ENCODE measurements at regions of chr22 and their contacts with region 1.

Region 1: GRCh38 chr22:21857481-21857914 is 9.9 kb downstream of the MAPK1 start:
- DNase-seq: no peak
- ATAC-seq: no peak
- H3K4me3 ChIP-seq: no peak overlapping the region
- H3K27ac ChIP-seq: peak overlapping the region in 7 of 12 donors; percentile 8 to 40 (median 29)
- H3K4me1 ChIP-seq: peaks cover 0 to 98% (median 78%) of the 10 kb centered on the region in 12 donors
- H3K27me3 ChIP-seq: no peaks in the 10 kb centered on the region
- CTCF ChIP-seq: no peak
- POLR2A ChIP-seq: no peak

Region 2: DNA sequence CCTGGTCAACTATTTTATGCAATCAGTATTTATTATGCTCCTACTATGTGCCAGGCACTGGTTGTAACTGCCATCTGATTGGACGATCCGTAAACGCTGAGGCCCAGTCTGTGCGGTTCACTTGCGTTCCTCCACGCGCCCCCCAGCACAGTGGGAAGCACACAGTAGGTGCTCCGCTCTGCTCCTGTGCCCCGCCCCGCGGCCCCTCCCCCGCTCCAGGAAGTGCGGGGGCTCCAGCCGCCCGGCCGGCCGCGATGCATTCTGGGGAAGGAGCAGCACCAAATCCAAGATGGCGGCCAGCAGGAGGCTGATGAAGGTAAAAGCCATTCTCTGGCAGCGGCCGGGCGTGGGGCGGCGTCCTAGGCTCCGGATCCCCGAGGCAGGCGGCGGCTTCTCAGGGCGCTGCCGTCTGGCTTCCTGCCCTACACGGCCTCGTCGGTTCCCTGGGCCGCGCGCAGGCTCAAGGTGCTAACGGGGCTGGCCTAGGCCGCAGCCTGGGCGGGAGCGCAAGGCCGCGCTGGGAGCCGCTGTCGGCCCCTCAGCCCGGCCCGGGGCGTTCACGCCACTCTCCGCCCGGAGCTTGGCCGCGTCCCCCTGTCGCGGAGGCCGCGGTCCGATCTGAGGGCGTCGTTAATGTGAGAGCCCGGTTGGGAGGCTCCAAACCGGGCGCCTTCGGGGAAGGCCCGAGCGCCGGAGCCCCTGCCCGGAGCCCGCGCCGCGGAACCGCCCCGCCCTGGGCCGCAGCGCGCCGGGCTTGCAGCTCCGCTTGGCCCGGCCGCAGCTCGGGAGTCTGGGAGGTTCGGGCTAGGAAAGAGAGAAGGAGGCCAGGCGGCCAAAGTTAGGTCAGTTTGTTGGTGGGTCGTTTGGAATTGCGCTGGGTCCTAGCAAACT is 289.8 kb before region 1 on chr22 and contains the start of gene UBE2L3:
- intact Hi-C with region 1: no loop called
- DNase-seq: peak; percentile 86 to 92 (median 88)
- ATAC-seq: peak; percentile 91 to 97 (median 96)
- H3K4me3 ChIP-seq: peak within 1 kb of the TSS; percentile 75 to 99 (median 92)
- H3K27ac ChIP-seq: peak within 1 kb of the TSS; percentile 80 to 97 (median 88)
- H3K4me1 ChIP-seq: peaks cover 4 to 46% (median 37%) of the 10 kb centered on the region in 12 donors
- H3K27me3 ChIP-seq: no peaks in the 10 kb centered on the region
- CTCF ChIP-seq: peak in 1 of 12 donors; percentile 25
- POLR2A ChIP-seq: peak in 1 of 2 donors; percentile 40
- total RNA-seq, gene UBE2L3: 42.9 to 73.1 (median 50.3) TPM

Region 3: GRCh38 chr22:21807544-21808529 is 49.7 kb before region 1 on chr22:
- intact Hi-C with region 1: loop called in 2 of 10 experiments (anchors 10 kb)
- DNase-seq: no peak
- ATAC-seq: no peak
- H3K4me3 ChIP-seq: no peak overlapping the region
- H3K27ac ChIP-seq: no peak overlapping the region
- H3K4me1 ChIP-seq: peaks cover 0 to 19% (median 7%) of the 10 kb centered on the region in 12 donors
- H3K27me3 ChIP-seq: no peaks in the 10 kb centered on the region
- CTCF ChIP-seq: no peak
- POLR2A ChIP-seq: no peak

Region 4: DNA sequence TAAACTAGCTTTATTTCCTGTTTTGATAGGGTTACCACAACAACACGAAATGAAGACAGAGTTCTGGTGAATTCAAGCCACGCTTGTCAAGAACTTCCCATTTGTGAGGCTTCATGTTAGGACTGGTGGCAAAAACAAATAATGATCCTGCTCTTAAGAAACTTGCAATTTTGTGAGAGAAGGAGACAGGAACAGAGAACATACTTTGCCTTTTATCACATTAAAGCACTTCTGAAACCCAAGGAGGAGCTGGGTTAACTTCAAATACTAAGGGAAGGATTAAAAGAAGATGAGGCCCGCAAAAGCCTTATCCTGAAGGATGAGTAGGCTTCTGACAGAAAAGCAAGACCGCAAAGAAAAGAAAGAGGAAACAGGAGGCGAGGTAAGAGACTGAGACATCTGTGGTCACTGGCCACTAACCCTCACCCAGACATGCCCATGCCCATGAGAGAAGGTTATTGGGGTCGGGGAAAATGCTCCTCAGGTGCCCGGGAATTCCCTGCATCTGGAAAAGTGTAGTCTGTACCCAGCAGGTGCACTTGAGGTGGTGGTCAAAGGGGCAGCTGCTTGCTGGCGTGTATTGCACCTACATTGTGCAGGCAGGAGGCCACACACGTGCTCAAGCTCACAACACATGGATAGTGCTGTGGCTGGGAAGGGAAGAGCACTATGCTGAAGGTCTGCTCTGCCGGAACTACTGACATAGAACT is 40.6 kb before region 1 on chr22:
- intact Hi-C with region 1: loop called in 2 of 10 experiments (anchors 5 kb)
- DNase-seq: no peak
- ATAC-seq: peak; percentile 62 to 92 (median 88)
- H3K4me3 ChIP-seq: peak overlapping the region in 4 of 12 donors; percentile 2 to 29 (median 3)
- H3K27ac ChIP-seq: peak overlapping the region in 10 of 12 donors; percentile 28 to 90 (median 59)
- H3K4me1 ChIP-seq: peaks cover 5 to 56% (median 36%) of the 10 kb centered on the region in 12 donors
- H3K27me3 ChIP-seq: no peaks in the 10 kb centered on the region
- CTCF ChIP-seq: no peak
- POLR2A ChIP-seq: no peak

Region 5: GRCh38 chr22:22181341-22181850 is 323.9 kb after region 1 on chr22:
- intact Hi-C with region 1: no loop called
- DNase-seq: no peak
- ATAC-seq: no peak
- H3K4me3 ChIP-seq: no peak overlapping the region
- H3K27ac ChIP-seq: no peak overlapping the region
- H3K4me1 ChIP-seq: no peaks in the 10 kb centered on the region
- H3K27me3 ChIP-seq: peaks cover 0 to 64% (median 18%) of the 10 kb centered on the region in 9 donors
- CTCF ChIP-seq: no peak
- POLR2A ChIP-seq: no peak

Region 6: DNA sequence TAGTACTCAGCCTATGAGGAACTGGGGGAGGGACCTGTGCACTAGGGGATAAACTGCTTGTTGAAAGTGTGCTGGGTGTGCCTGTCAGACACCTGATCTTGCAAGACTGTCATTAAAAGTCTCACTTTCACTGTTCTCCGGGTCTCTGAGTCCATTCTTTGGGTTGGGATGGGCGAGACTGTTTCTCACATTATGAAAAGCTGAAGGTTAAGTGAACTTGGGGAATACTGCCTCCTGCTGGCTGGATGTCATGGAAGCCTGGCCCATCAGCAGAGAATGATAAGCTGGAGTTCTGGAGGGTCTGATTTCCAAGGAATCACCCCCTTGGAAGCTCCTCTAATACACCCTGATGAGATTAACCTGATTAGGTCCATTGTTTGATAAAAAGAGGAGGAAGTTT is 378.1 kb after region 1 on chr22:
- intact Hi-C with region 1: no loop called
- DNase-seq: no peak
- ATAC-seq: no peak
- H3K4me3 ChIP-seq: no peak overlapping the region
- H3K27ac ChIP-seq: no peak overlapping the region
- H3K4me1 ChIP-seq: no peaks in the 10 kb centered on the region
- H3K27me3 ChIP-seq: peaks cover 0 to 16% (median 0%) of the 10 kb centered on the region in 9 donors
- CTCF ChIP-seq: peak in 7 of 12 donors; percentile 9 to 43 (median 28)
- POLR2A ChIP-seq: no peak